Tibial artery (tissue), 4 donors: ENCODE measurements at regions of chr9 and their contacts with region 1.

Region 1: GRCh38 chr9:26727471-26727870 is 165.1 kb downstream of the CAAP1 start:
- DNase-seq: no peak
- H3K4me3 ChIP-seq: no peak overlapping the region
- H3K27ac ChIP-seq: no peak overlapping the region
- H3K4me1 ChIP-seq: no peaks in the 10 kb centered on the region
- H3K27me3 ChIP-seq: no peaks in the 10 kb centered on the region
- CTCF ChIP-seq: no peak

Region 2: DNA sequence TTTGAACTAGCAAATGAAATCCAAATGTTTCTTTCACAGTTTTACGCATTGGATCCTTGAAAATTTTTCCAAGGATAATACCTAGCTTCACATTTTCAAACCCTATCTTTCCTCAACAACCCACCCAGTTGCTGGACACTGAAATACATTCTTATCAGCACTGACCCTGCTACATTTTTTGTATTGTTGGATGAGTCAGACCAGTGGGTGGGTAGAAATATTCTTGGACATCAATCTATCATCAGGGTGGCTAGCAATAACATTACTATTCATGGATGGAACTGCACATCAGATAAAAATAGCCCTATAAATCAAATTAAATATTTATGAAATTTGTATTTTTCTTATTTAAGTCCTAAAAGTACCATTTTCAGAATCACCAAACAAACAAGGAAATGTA is 1774.4 kb before region 1 on chr9:
- intact Hi-C with region 1: loop called (anchors 5 kb)
- DNase-seq: no peak
- H3K4me3 ChIP-seq: no peak overlapping the region
- H3K27ac ChIP-seq: no peak overlapping the region
- H3K4me1 ChIP-seq: no peaks in the 10 kb centered on the region
- H3K27me3 ChIP-seq: no peaks in the 10 kb centered on the region
- CTCF ChIP-seq: no peak